ENCODE measurements at regions of chr17 and their contacts with region 1.

Region 1: GRCh38 chr17:16380640-16381495 is at the start of gene UBB:
- DNase-seq: peak; percentile 96
- H3K4me3 Mint-ChIP-seq: peak within 1 kb of the TSS; percentile 89
- H3K27ac Mint-ChIP-seq: peak within 1 kb of the TSS; percentile 100
- H3K4me1 Mint-ChIP-seq: peaks cover 32% of the 10 kb centered on the region
- H3K27me3 Mint-ChIP-seq: no peaks in the 10 kb centered on the region
- CTCF ChIP-seq: no peak
- total RNA-seq, gene UBB: 626 and 729 TPM in 2 replicates

Region 2: DNA sequence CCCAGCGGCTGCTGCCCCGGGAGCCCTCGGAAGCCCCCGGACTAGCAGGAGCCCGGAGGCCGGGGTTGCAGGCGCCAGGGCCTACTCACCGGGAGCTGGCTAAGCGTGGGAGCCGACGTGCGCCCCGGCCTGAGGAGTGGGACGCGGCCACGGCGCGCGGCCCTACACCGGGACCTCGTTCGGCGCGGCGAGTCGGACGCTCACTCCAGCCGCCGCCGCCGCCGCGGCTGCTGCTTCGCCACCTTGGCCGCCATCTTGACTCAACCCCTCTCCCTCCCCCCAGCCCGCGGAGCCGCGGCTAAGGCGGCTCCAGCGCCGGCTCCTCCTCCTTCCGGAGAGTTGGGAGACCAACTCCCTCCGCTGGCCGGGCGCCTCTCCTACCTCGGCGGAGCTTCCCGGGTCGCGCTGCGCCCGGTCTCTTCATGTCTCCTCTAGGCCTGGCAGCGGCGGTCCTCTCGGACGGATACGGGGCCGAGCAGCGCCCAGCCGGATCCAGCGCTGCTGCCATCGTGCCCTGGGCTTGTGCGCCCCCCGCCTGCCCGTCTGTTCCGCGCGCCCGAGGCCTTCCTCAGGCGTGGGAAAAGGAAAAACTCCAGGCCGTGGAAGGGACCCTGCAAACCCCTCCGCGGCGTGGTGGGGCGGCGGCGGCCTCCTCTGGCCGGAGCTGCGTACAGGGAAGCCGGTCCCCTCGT is 165.4 kb before region 1 on chr17 and contains the start of gene NCOR1:
- CTCF ChIA-PET with region 1: no interaction called
- POLR2A ChIA-PET with region 1: interaction called, 14 read pairs
- intact Hi-C with region 1: no loop called
- DNase-seq: peak; percentile 95
- H3K4me3 Mint-ChIP-seq: peak within 1 kb of the TSS; percentile 99
- H3K27ac Mint-ChIP-seq: peak within 1 kb of the TSS; percentile 84
- H3K4me1 Mint-ChIP-seq: peaks cover 11% of the 10 kb centered on the region
- H3K27me3 Mint-ChIP-seq: no peaks in the 10 kb centered on the region
- CTCF ChIP-seq: peak; percentile 20
- total RNA-seq, gene NCOR1: 120 and 138 TPM in 2 replicates

Region 3: GRCh38 chr17:16232391-16232790 is 148.5 kb before region 1 on chr17:
- CTCF ChIA-PET with region 1: no interaction called
- POLR2A ChIA-PET with region 1: no interaction called
- intact Hi-C with region 1: no loop called
- DNase-seq: no peak
- H3K4me3 Mint-ChIP-seq: no peak overlapping the region
- H3K27ac Mint-ChIP-seq: no peak overlapping the region
- H3K4me1 Mint-ChIP-seq: peaks cover 11% of the 10 kb centered on the region
- H3K27me3 Mint-ChIP-seq: no peaks in the 10 kb centered on the region
- CTCF ChIP-seq: no peak

Region 4: GRCh38 chr17:16273499-16273898 is 107.4 kb before region 1 on chr17:
- CTCF ChIA-PET with region 1: no interaction called
- POLR2A ChIA-PET with region 1: no interaction called
- intact Hi-C with region 1: no loop called
- DNase-seq: no peak
- H3K4me3 Mint-ChIP-seq: no peak overlapping the region
- H3K27ac Mint-ChIP-seq: no peak overlapping the region
- H3K4me1 Mint-ChIP-seq: peaks cover 12% of the 10 kb centered on the region
- H3K27me3 Mint-ChIP-seq: no peaks in the 10 kb centered on the region
- CTCF ChIP-seq: no peak

Region 5: GRCh38 chr17:16353317-16354174 is 27.3 kb before region 1 on chr17 and contains the start of gene CENPV:
- CTCF ChIA-PET with region 1: interaction called, 3 read pairs
- POLR2A ChIA-PET with region 1: interaction called, 33 read pairs
- intact Hi-C with region 1: no loop called
- DNase-seq: peak; percentile 11
- H3K4me3 Mint-ChIP-seq: peak within 1 kb of the TSS; percentile 81
- H3K27ac Mint-ChIP-seq: peak within 1 kb of the TSS; percentile 43
- H3K4me1 Mint-ChIP-seq: peaks cover 4% of the 10 kb centered on the region
- H3K27me3 Mint-ChIP-seq: no peaks in the 10 kb centered on the region
- CTCF ChIP-seq: peak; percentile 9
- total RNA-seq, gene CENPV: 22.4 and 27.7 TPM in 2 replicates

Region 6: DNA sequence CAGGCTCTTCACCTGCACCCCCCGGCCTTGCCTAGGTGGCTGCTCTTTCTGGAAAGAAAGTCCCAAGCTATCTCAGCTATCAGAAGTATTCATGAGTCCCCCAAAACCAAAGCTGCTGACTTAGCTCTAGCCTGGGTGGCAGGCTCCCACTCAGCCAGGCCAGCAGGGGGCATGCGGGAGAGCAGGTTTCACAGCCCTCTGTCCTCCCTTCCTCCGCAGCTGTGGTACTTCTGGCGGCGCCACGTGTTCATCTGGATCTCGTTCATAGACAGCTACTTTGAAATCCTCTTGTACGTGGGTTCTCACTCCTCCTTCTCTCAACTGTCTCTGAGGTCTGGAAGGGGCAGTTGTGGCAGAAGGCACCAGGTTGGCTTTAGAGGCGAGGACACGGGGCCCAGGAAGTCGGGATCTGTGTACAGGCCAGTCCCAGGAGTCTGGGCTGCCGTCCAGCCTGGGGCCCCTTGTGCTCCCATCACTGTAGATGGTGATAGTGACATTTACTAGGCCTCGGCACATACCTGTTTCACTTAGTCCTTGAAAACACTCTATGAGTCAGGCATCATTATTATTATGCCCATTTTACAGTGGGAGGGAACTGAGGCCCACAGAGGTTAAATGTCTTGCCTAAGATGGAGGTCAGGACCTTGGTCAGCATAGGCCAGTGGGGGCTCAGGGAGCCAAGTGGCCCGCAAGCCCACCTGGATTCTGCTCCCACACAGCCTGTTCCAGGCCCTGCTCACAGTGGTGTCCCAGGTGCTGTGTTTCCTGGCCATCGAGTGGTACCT is 47.4 kb after region 1 on chr17:
- CTCF ChIA-PET with region 1: interaction called, 13 read pairs
- POLR2A ChIA-PET with region 1: interaction called, 3 read pairs
- intact Hi-C with region 1: no loop called
- DNase-seq: peak; percentile 56
- H3K4me3 Mint-ChIP-seq: no peak overlapping the region
- H3K27ac Mint-ChIP-seq: no peak overlapping the region
- H3K4me1 Mint-ChIP-seq: no peaks in the 10 kb centered on the region
- H3K27me3 Mint-ChIP-seq: no peaks in the 10 kb centered on the region
- CTCF ChIP-seq: peak; percentile 46

Region 7: GRCh38 chr17:16467886-16468285 is 87.0 kb after region 1 on chr17:
- CTCF ChIA-PET with region 1: no interaction called
- POLR2A ChIA-PET with region 1: no interaction called
- intact Hi-C with region 1: no loop called
- DNase-seq: no peak
- H3K4me3 Mint-ChIP-seq: no peak overlapping the region
- H3K27ac Mint-ChIP-seq: no peak overlapping the region
- H3K4me1 Mint-ChIP-seq: no peaks in the 10 kb centered on the region
- H3K27me3 Mint-ChIP-seq: peaks cover 55% of the 10 kb centered on the region
- CTCF ChIP-seq: no peak

Region 8: GRCh38 chr17:16589097-16589969 is 208.5 kb after region 1 on chr17:
- CTCF ChIA-PET with region 1: no interaction called
- POLR2A ChIA-PET with region 1: no interaction called
- intact Hi-C with region 1: loop called (anchors 10 kb)
- DNase-seq: peak; percentile 87
- H3K4me3 Mint-ChIP-seq: peak overlapping the region; percentile 70
- H3K27ac Mint-ChIP-seq: peak overlapping the region; percentile 35
- H3K4me1 Mint-ChIP-seq: peaks cover 12% of the 10 kb centered on the region
- H3K27me3 Mint-ChIP-seq: no peaks in the 10 kb centered on the region
- CTCF ChIP-seq: peak; percentile 96